H1 (cell line): ENCODE measurements at regions of chr1 and their contacts with region 1.

Region 1: DNA sequence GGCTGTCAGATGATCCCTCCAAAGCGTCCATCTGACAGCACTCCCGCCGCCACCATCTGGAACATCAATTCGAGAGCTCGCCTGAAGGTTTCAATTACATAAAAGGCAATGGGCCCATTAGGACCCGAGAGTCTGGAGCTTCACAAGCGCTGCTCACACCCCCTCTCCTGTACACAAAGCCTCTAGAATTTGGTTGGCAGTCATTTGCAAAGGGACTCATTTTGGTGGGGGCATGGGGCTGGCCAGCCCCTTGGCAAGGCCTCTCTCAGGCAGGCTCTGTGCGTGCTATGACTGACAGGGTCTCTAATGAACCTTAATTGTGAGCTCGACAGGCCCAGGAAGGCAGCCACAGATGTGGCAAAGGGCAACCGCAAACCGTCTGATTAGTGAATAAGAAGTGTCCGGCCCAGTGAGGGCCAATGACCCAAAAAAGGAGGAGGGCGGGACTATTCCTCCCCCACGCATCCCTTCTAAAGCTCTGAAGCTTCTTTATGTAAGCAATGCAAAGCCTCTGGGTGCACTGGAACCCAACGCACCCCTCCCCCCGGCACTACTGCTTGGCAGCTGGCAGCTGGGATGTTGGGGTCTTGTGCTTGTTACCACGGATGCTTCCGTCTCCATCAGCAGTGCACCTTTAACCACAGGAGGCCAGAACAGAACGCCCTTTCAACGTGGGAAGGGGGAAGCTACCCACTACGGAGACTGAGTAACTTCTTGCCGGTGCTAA is 79.4 kb downstream of the CAPZB start:
- DNase-seq: no peak
- H3K4me3 ChIP-seq: no peak overlapping the region
- H3K27ac ChIP-seq: no peak overlapping the region
- H3K4me1 ChIP-seq: peaks cover 18 to 31% (median 22%) of the 10 kb centered on the region in 4 experiments
- H3K27me3 ChIP-seq: no peaks in the 10 kb centered on the region
- CTCF ChIP-seq: no peak
- EP300 ChIP-seq: no peak
- POLR2A ChIP-seq: no peak
- RAD21 ChIP-seq: no peak

Region 2: GRCh38 chr1:19240673-19241538 is 165.0 kb before region 1 on chr1:
- CTCF ChIA-PET with region 1: no interaction called
- POLR2A ChIA-PET with region 1: no interaction called
- DNase-seq: peak in 1 of 2 experiments; percentile 67
- H3K4me3 ChIP-seq: no peak overlapping the region
- H3K27ac ChIP-seq: no peak overlapping the region
- H3K4me1 ChIP-seq: no peaks in the 10 kb centered on the region
- H3K27me3 ChIP-seq: no peaks in the 10 kb centered on the region
- CTCF ChIP-seq: peak; percentile 48 to 84 (median 78); a peak in 3 of 4 replicates
- EP300 ChIP-seq: no peak
- POLR2A ChIP-seq: no peak
- RAD21 ChIP-seq: peak; percentile 35 to 52

Region 3: GRCh38 chr1:19390901-19391595 is 14.9 kb before region 1 on chr1:
- CTCF ChIA-PET with region 1: interaction called, 97 read pairs
- POLR2A ChIA-PET with region 1: interaction called, 4 read pairs
- DNase-seq: no peak
- H3K4me3 ChIP-seq: no peak overlapping the region
- H3K27ac ChIP-seq: no peak overlapping the region
- H3K4me1 ChIP-seq: peaks cover 0 to 7% (median 4%) of the 10 kb centered on the region in 4 experiments; a peak in 5 of 7 replicates
- H3K27me3 ChIP-seq: no peaks in the 10 kb centered on the region
- CTCF ChIP-seq: peak; percentile 68 to 86 (median 73)
- EP300 ChIP-seq: no peak
- POLR2A ChIP-seq: no peak
- RAD21 ChIP-seq: peak; percentile 52 to 61

Region 4: DNA sequence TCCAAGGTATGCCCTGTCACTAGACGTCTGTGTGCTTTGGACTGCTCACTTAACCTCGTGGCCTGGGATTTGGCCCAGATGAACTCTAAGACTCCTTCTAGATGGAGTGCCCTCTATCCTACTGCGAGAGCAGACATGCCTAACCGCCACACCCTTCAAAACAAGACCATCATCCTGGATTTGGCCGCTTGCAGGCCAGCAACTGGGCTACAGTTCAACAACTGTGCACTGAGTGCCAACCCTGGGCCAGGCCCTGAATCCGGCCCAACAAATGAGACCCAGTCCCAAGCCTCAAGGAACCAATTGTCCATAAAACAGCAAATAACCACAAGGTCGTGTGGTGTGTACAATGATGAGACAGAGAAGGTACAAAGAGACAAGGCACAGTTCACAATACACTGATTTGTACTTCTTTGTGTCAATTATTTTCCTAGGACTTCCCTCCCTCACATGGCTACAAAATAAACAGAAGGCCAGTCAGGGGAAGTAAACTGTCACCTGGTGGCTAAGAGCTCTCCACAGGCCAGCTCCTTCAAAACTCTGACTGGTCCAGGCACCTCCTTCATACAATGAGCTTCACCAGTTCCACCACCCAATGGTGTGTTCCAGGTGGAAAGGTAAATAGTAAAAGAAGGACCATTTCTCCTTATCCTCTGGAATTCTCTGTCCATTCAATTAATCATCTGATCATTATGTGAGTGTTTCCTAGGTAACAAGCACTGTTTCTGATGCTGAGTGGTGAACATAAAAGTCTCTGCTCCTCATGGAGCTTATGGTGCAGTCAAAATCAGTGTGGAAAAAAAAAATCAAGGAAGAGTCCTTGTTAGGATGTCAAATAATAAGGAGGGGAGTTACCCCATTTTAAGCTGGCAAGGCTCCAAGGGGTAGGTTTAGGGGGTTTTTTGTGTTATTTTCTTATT is 19.0 kb after region 1 on chr1:
- CTCF ChIA-PET with region 1: interaction called, 46 read pairs
- POLR2A ChIA-PET with region 1: interaction called, 4 read pairs
- DNase-seq: no peak
- H3K4me3 ChIP-seq: no peak overlapping the region
- H3K27ac ChIP-seq: no peak overlapping the region
- H3K4me1 ChIP-seq: peaks cover 0 to 3% (median 0%) of the 10 kb centered on the region in 4 experiments; a peak in 1 of 7 replicates
- H3K27me3 ChIP-seq: no peaks in the 10 kb centered on the region
- CTCF ChIP-seq: no peak
- EP300 ChIP-seq: no peak
- POLR2A ChIP-seq: no peak
- RAD21 ChIP-seq: no peak

Region 5: DNA sequence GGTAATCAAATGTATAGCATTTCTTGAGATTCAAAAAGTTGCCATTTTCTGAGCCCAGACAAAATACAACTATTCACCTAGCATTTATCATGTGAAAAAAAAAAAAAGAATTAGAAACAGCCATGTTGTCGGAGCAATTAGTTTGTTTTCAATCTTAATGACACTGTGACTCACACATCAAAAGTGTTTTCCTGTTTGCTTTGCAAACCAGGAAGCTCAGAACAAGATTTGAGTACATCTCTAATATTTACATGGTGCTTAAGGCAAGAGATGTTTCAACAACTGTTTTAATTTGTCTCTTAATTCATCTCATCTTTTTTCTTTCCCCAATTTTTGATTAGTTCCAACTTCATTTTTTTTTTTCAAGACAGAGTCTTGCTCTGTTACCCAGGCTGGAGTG is 141.9 kb after region 1 on chr1:
- CTCF ChIA-PET with region 1: no interaction called
- POLR2A ChIA-PET with region 1: no interaction called
- DNase-seq: no peak
- H3K4me3 ChIP-seq: no peak overlapping the region
- H3K27ac ChIP-seq: no peak overlapping the region
- H3K4me1 ChIP-seq: no peaks in the 10 kb centered on the region
- H3K27me3 ChIP-seq: no peaks in the 10 kb centered on the region
- CTCF ChIP-seq: no peak
- EP300 ChIP-seq: no peak
- POLR2A ChIP-seq: no peak
- RAD21 ChIP-seq: no peak